ENCODE measurements at regions of chr10 and their contacts with region 1.

Region 1: DNA sequence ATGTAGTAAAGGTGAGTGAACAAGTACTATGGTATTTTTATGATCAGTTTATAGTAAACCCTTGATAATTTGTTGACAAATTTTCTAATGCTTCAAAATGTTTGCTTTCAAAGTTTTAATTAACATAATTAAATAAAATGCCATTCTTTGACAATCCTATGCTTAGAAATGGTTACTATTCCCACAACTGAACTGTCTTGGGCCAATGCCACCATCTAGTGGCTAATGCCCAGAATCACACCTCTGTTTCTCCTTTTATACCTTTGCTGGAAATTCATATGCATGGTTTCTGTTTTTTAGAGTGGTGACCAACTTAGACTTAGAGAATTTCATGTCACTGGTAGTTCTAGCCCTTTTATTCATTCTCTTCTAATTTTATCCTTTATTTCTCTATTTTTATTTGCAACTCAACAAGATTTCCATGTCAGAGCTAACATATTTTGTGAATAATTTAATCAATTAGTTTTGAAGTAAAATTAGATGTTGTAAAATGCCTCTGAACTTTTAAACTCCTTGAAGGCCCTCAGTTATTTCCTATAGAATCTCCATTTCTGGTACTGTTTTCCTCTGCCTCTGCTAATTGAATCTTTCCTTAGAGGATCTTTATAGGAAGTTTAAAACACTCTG is 31.1 kb downstream of the PCGF5 start:
- DNase-seq: peak; percentile 52 to 61
- H3K4me3 ChIP-seq: no peak overlapping the region
- H3K4me1 ChIP-seq: no peaks in the 10 kb centered on the region
- H3K27me3 ChIP-seq: no peaks in the 10 kb centered on the region

Region 2: GRCh38 chr10:90920986-90921666 is 330.4 kb before region 1 on chr10 and contains the start of gene ANKRD1:
- in situ Hi-C with region 1: loop called (anchors 25 kb)
- DNase-seq: no peak
- H3K4me3 ChIP-seq: no peak within 1 kb of the TSS
- H3K4me1 ChIP-seq: peaks cover 14% of the 10 kb centered on the region
- H3K27me3 ChIP-seq: no peaks in the 10 kb centered on the region

Region 3: GRCh38 chr10:91006001-91006751 is 245.4 kb before region 1 on chr10:
- in situ Hi-C with region 1: loop called (anchors 10 kb)
- DNase-seq: peak; percentile 59 to 76
- H3K4me3 ChIP-seq: no peak overlapping the region
- H3K4me1 ChIP-seq: peaks cover 4% of the 10 kb centered on the region; the same call in 1 of the 2 replicates
- H3K27me3 ChIP-seq: no peaks in the 10 kb centered on the region

Region 4: DNA sequence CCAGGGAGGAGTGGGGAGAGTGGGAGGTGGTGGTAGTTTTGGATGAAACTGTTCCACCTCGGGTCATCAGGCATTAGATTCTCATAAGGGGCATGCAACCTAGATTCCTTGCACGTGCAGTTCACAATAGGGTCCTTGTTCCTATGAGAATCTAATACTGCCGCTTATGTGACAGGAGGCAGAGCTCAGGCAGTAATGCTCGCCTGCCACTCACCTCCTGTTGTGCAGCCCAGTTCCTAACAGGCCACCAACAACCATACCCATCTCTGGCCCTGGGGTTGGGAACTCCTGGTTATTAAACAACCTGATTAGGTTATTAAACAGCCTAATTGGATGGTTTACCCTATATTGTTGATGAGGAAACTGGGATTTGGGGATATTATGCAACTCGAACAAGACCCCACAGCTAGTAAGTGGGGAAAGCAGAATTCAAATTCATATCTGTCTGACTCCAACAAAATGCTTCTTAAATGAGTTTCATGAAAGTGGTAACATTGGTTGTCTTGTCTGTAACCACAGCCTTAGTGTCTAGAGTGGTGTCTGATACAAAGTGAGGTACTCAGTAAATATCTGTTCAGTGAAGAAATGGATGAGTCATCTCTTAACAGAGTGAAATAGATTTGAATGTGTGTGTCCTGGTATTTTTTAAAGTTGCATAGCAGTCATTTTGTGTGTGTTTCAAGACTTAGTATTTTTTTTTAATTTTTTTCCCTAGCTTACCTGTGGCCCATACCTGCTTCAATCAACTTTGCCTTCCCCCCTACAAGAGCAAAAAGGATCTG is 260.2 kb after region 1 on chr10:
- in situ Hi-C with region 1: no loop called
- DNase-seq: no peak
- H3K4me3 ChIP-seq: no peak overlapping the region
- H3K4me1 ChIP-seq: no peaks in the 10 kb centered on the region
- H3K27me3 ChIP-seq: no peaks in the 10 kb centered on the region

Region 5: GRCh38 chr10:92057361-92057760 is 805.8 kb after region 1 on chr10:
- in situ Hi-C with region 1: no loop called
- DNase-seq: no peak
- H3K4me3 ChIP-seq: no peak overlapping the region
- H3K4me1 ChIP-seq: no peaks in the 10 kb centered on the region
- H3K27me3 ChIP-seq: no peaks in the 10 kb centered on the region

Measured in HAP-1 (cell line).